ENCODE measurements at regions of chr6 and their contacts with region 1.

Region 1: GRCh38 chr6:33299237-33299944 is 649 bp upstream of the RGL2 start:
- DNase-seq: peak; percentile 88
- ATAC-seq: peak; percentile 73
- H3K4me3 ChIP-seq: peak overlapping the region; percentile 75 to 88 (median 79)
- H3K27ac ChIP-seq: peak overlapping the region; percentile 93
- H3K4me1 ChIP-seq: peaks cover 27% of the 10 kb centered on the region
- H3K27me3 ChIP-seq: no peaks in the 10 kb centered on the region; a peak in 1 of 5 replicates
- CTCF ChIP-seq: peak; percentile 98
- EP300 ChIP-seq: peak in 1 of 2 experiments; percentile 27; a peak in 1 of 4 replicates
- POLR2A ChIP-seq: peak; percentile 88 to 95
- RAD21 ChIP-seq: peak; percentile 74

Region 2: DNA sequence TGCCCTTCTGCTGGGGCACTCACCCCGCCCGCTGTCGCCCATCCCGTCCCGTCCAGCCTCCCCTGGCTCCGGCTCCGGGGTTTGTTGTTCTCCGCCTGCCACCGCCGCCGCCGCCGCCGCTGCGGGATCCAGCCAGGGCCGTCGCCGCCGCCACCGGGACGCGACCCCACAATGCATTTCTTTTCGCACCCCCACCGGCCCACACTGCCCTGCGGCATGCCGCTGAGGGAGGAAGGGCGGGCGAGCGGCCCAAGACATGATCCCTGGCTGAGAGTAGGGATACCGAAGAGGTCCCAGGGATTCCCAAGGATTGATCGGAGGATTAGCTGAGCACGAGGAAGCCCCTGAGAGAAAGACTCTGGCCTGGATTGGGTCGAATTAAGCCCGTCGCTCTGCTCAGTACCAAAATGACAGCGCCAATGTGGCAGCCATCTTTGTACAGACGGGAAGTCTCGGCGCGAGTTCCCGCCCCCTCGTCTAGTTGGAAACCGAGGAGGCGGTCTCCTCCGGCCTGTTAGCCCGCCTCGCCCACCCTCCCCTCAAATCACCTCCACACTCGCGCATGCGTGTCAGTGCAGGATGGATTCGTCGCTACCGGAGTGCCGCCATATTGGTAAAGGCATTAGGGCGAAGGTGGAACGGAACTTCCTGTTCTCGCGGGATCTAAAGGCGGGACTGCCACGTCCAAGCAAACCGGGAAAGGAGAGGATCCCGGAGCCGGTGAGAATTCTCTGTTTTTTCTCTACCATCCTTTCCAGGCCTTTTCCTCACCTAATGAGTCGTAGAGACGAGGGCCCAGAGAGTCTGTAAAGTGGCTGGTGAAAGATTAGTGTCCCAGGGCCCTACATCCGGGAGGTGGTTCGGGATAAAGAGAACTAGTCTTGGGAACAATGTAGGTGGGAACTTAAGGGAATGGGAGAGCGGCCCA is 98.9 kb before region 1 on chr6 and contains the starts of genes RXRB and SLC39A7:
- CTCF ChIA-PET with region 1: no interaction called
- POLR2A ChIA-PET with region 1: interaction called, 12 read pairs
- in situ Hi-C with region 1: loop called (anchors 5 kb)
- intact Hi-C with region 1: loop called (anchors 1 kb)
- DNase-seq: peak; percentile 100
- ATAC-seq: peak; percentile 48
- H3K4me3 ChIP-seq: peak within 1 kb of the TSS; percentile 87 to 93 (median 93)
- H3K27ac ChIP-seq: peak within 1 kb of the TSS; percentile 99
- H3K4me1 ChIP-seq: peaks cover 66% of the 10 kb centered on the region
- H3K27me3 ChIP-seq: peaks cover 0 to 4% of the 10 kb centered on the region in 2 experiments; a peak in 1 of 5 replicates
- CTCF ChIP-seq: no peak
- EP300 ChIP-seq: peak in 1 of 2 experiments; percentile 17; a peak in 2 of 4 replicates
- POLR2A ChIP-seq: peak in 1 of 2 experiments; percentile 90; a peak in 2 of 4 replicates
- RAD21 ChIP-seq: peak; percentile 28; the same call in 1 of the 2 replicates
- total RNA-seq, gene RXRB: 21.2 and 26.7 TPM in 2 replicates
- total RNA-seq, gene SLC39A7: 127 and 229 TPM in 2 replicates

Region 3: DNA sequence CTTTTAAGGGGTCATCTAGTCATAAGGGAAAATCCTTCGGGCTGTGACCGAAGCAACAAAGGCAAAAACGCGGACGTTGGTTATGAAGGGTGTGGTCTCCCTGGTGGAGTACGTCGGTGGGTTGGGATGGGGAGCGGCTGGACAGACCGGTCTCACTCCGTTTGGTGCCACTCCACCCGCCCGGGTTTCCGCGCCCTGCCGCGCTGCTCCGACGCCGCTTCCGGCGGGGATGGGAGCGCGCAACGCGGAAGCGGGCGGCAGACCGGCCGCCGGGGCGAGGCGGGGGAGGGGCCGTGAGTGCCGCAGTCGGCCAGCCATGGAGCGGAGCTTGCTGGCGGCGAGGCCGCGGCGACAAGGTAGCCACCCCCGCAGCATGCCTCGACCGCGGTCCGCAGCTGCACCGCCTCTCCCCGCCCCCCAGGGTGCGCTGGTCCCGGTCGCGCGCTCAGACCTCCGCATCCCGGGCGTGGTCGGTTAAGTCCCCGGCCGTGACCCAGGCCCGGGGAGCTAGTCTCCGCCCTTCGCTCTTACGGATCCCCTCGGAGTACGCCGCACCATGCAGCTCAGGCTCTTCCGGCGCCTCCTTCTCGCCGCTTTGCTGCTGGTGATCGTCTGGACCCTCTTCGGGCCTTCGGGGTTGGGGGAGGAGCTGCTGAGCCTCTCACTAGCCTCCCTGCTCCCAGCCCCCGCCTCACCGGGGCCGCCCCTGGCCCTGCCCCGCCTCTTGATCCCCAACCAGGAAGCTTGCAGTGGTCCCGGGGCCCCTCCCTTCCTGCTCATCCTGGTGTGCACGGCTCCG is 22.3 kb before region 1 on chr6 and contains the start of gene B3GALT4:
- CTCF ChIA-PET with region 1: interaction called, 52 read pairs
- POLR2A ChIA-PET with region 1: interaction called, 32 read pairs
- in situ Hi-C with region 1: no loop called
- intact Hi-C with region 1: loop called (anchors 1 kb)
- DNase-seq: no peak
- ATAC-seq: peak; percentile 10
- H3K4me3 ChIP-seq: no peak within 1 kb of the TSS
- H3K27ac ChIP-seq: no peak within 1 kb of the TSS
- H3K4me1 ChIP-seq: peaks cover 31% of the 10 kb centered on the region
- H3K27me3 ChIP-seq: no peaks in the 10 kb centered on the region; a peak in 1 of 5 replicates
- CTCF ChIP-seq: no peak; the same call in 1 of the 2 replicates
- EP300 ChIP-seq: no peak
- POLR2A ChIP-seq: peak; percentile 23 to 55; a peak in 3 of 4 replicates
- RAD21 ChIP-seq: peak; percentile 66
- total RNA-seq, gene B3GALT4: 0.27 TPM in 1 of 2 replicates, not detected in the other

Region 4: GRCh38 chr6:33288921-33289748 is 10.3 kb before region 1 on chr6 and contains the starts of genes PFDN6 and WDR46:
- CTCF ChIA-PET with region 1: interaction called, 3 read pairs
- POLR2A ChIA-PET with region 1: interaction called, 34 read pairs
- in situ Hi-C with region 1: no loop called
- intact Hi-C with region 1: loop called (anchors 1 kb)
- DNase-seq: peak; percentile 95
- ATAC-seq: peak; percentile 97
- H3K4me3 ChIP-seq: peak within 1 kb of the TSS; percentile 73 to 96 (median 94)
- H3K27ac ChIP-seq: peak within 1 kb of the TSS; percentile 56
- H3K4me1 ChIP-seq: peaks cover 22% of the 10 kb centered on the region
- H3K27me3 ChIP-seq: no peaks in the 10 kb centered on the region; a peak in 1 of 5 replicates
- CTCF ChIP-seq: 0 out of 2 replicates have a peak, but pooled peaks have one; percentile 3
- EP300 ChIP-seq: no peak; a peak in 1 of 4 replicates
- POLR2A ChIP-seq: peak; percentile 71 to 72
- RAD21 ChIP-seq: no peak
- total RNA-seq, gene PFDN6: 87.0 and 118 TPM in 2 replicates
- total RNA-seq, gene WDR46: 99.9 and 105 TPM in 2 replicates

Region 5: GRCh38 chr6:33317669-33318425 is 18.5 kb after region 1 on chr6 and contains the start of gene ZBTB22:
- CTCF ChIA-PET with region 1: no interaction called
- POLR2A ChIA-PET with region 1: interaction called, 57 read pairs
- in situ Hi-C with region 1: no loop called
- intact Hi-C with region 1: no loop called
- DNase-seq: peak; percentile 99
- ATAC-seq: peak; percentile 79
- H3K4me3 ChIP-seq: peak within 1 kb of the TSS; percentile 71 to 79 (median 73)
- H3K27ac ChIP-seq: peak within 1 kb of the TSS; percentile 82
- H3K4me1 ChIP-seq: peaks cover 55% of the 10 kb centered on the region
- H3K27me3 ChIP-seq: no peaks in the 10 kb centered on the region; a peak in 2 of 5 replicates
- CTCF ChIP-seq: no peak
- EP300 ChIP-seq: no peak
- POLR2A ChIP-seq: no peak
- RAD21 ChIP-seq: no peak
- total RNA-seq, gene ZBTB22: 6.6 and 8.0 TPM in 2 replicates

Measured in HepG2 (cell line).